Sigmoid colon (tissue), 7 donors: ENCODE measurements at regions of chr14 and their contacts with region 1.

Region 1: GRCh38 chr14:59483900-59484638 is at the starts of genes JKAMP and L3HYPDH:
- DNase-seq: peak; percentile 98
- H3K4me3 ChIP-seq: peak within 1 kb of the TSS; percentile 71 to 94 (median 79)
- H3K27ac ChIP-seq: peak within 1 kb of the TSS; percentile 90 to 95 (median 94)
- H3K4me1 ChIP-seq: peaks cover 0 to 70% (median 53%) of the 10 kb centered on the region in 4 donors
- H3K27me3 ChIP-seq: no peaks in the 10 kb centered on the region
- CTCF ChIP-seq: peak; percentile 38 to 68 (median 52)
- EP300 ChIP-seq: peak in 1 of 4 donors; percentile 37
- POLR2A ChIP-seq: peak; percentile 71 to 74
- total RNA-seq, gene JKAMP: 26.6 to 49.0 (median 37.5) TPM
- total RNA-seq, gene L3HYPDH: 23.9 to 46.0 (median 30.4) TPM

Region 2: DNA sequence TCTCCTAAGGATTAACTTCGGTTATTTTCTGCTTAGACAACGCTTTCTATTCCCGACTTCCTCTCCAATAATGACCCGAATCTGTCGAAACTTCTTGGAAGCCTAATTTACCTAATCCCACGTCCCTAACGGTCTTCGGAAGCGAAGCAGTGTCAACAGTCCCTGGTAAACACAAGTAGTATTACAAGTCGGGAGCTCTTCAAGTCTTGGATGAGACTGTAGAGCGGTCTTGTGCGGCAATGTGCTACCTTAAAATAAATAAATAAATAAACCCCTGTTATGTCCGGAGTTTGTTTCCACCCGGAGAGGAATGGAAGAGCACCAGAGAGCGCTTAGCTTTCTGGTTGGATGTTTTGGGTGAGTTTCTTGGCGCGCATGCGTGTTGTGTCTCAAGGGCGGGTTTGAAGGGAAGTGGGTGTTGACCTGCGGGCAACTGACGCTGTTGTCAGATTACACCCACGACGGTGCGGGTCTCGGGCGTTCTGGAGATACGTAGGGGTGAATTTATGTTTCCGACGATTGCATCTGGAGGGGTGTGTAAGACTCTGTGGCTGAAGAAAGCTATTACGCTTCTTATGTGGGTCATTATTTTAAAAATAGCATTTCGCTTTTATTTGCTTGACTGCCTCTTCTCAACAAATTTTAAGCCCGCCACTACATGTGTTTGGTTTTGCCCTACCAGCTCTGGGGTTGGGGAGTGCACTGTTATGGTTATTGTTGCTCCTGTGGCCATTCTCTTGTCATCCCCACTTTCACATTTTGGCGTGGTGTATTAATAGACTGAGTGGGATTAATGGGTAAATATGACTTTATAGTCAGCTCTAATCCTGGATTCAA is 1056.6 kb before region 1 on chr14 and contains the starts of genes KIAA0586 and TIMM9:
- intact Hi-C with region 1: loop called (anchors 10 kb)
- DNase-seq: peak; percentile 99
- H3K4me3 ChIP-seq: peak within 1 kb of the TSS; percentile 78 to 88 (median 84)
- H3K27ac ChIP-seq: peak within 1 kb of the TSS; percentile 87 to 96 (median 89)
- H3K4me1 ChIP-seq: peaks cover 0 to 34% (median 26%) of the 10 kb centered on the region in 4 donors
- H3K27me3 ChIP-seq: no peaks in the 10 kb centered on the region
- CTCF ChIP-seq: peak in 1 of 4 experiments; percentile 5
- EP300 ChIP-seq: peak in 1 of 4 donors; percentile 40
- POLR2A ChIP-seq: peak; percentile 55 to 69
- total RNA-seq, gene KIAA0586: 12.8 to 20.2 (median 16.0) TPM
- total RNA-seq, gene TIMM9: 70.3 to 130 (median 83.6) TPM

Region 3: GRCh38 chr14:59464486-59465315 is 19.4 kb before region 1 on chr14:
- intact Hi-C with region 1: loop called (anchors 2 kb)
- DNase-seq: peak; percentile 88
- H3K4me3 ChIP-seq: peak overlapping the region; percentile 53 to 80 (median 72)
- H3K27ac ChIP-seq: peak overlapping the region; percentile 86 to 87 (median 86)
- H3K4me1 ChIP-seq: peaks cover 0 to 19% (median 8%) of the 10 kb centered on the region in 4 donors
- H3K27me3 ChIP-seq: no peaks in the 10 kb centered on the region
- CTCF ChIP-seq: no peak
- EP300 ChIP-seq: no peak
- POLR2A ChIP-seq: no peak